Right ventricle myocardium inferior (tissue), 1 donor: ENCODE measurements at regions of chr16 and their contacts with region 1.

Region 1: GRCh38 chr16:27972500-27972899 is 91.0 kb downstream of the GSG1L start:
- DNase-seq: no peak
- ATAC-seq: no peak

Region 2: GRCh38 chr16:28069971-28070794 is 97.7 kb after region 1 on chr16:
- intact Hi-C with region 1: loop called (anchors 2 kb)
- DNase-seq: no peak
- ATAC-seq: peak; percentile 21